A549 (cell line): ENCODE measurements at regions of chr11 and their contacts with region 1.

Region 1: DNA sequence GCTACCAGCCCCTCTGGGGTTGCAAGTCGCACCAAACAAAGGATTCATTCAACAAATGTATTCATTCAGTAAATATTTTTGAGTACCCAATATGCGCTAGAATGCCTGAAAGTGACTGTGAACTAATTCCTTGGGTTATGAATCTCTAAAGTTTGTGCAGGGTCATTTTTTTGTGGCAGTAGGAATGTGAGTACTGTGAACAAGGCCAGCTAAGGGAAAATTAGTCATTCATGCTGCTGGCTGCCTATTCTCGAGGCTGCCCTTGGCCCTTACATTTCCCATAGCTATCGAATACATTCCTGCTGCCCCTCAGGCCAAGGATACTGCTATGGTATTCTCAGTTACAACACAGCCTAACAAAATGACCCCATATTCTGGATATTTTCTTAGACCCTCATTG is 141.6 kb downstream of the TRPC6 start:
- DNase-seq: no peak
- ATAC-seq: no peak
- H3K4me3 ChIP-seq: no peak overlapping the region
- H3K27ac ChIP-seq: peak overlapping the region in 1 of 2 experiments; percentile 16; a peak in 1 of 6 replicates
- H3K4me1 ChIP-seq: peaks cover 32% of the 10 kb centered on the region
- CTCF ChIP-seq: no peak
- EP300 ChIP-seq: no peak
- POLR2A ChIP-seq: no peak
- RAD21 ChIP-seq: no peak

Region 2: GRCh38 chr11:101269990-101270660 is 172.0 kb before region 1 on chr11:
- CTCF ChIA-PET with region 1: no interaction called
- POLR2A ChIA-PET with region 1: no interaction called
- DNase-seq: no peak
- ATAC-seq: no peak
- H3K4me3 ChIP-seq: no peak overlapping the region
- H3K27ac ChIP-seq: no peak overlapping the region
- H3K4me1 ChIP-seq: no peaks in the 10 kb centered on the region
- CTCF ChIP-seq: no peak
- EP300 ChIP-seq: no peak
- POLR2A ChIP-seq: no peak
- RAD21 ChIP-seq: no peak

Region 3: GRCh38 chr11:101428918-101429317 is 13.3 kb before region 1 on chr11:
- CTCF ChIA-PET with region 1: interaction called, 10 read pairs
- POLR2A ChIA-PET with region 1: no interaction called
- DNase-seq: peak in 1 of 2 experiments; percentile 46
- ATAC-seq: peak; percentile 62 to 83; a peak in 4 of 6 replicates
- H3K4me3 ChIP-seq: no peak overlapping the region
- H3K27ac ChIP-seq: peak overlapping the region in 1 of 2 experiments; percentile 46; a peak in 1 of 6 replicates
- H3K4me1 ChIP-seq: no peaks in the 10 kb centered on the region
- CTCF ChIP-seq: peak; percentile 47; the same call in 2 of the 3 replicates
- EP300 ChIP-seq: no peak
- POLR2A ChIP-seq: no peak
- RAD21 ChIP-seq: peak; percentile 63 to 75